ENCODE measurements at regions of chr5 and their contacts with region 1.

Region 1: DNA sequence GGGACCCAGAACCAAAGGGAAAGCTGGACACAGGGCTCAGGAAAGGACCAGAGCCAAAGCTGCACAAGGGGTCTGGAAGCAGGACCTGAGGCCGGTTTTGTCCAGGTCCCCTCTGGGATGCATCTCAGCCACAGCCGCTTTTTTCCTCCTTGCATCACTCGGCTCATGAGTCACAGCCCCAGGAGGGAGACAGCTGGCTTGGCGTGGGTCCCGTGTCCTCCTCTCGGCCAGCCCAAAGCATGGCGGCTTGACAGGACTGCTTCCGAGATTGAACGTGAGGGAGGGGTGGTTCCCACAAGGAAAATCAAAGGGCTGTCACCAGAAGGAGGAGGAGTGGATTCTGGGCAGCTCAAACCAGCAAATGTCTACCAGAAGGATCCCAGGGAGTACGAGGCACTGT is 56.7 kb upstream of the CPLX2 start:
- DNase-seq: peak; percentile 71 to 81
- H3K4me3 ChIP-seq: no peak overlapping the region
- H3K27ac ChIP-seq: peak overlapping the region; percentile 88
- H3K4me1 ChIP-seq: peaks cover 43% of the 10 kb centered on the region
- H3K27me3 ChIP-seq: no peaks in the 10 kb centered on the region
- CTCF ChIP-seq: no peak

Region 2: GRCh38 chr5:175689147-175689991 is 125.3 kb before region 1 on chr5:
- CTCF ChIA-PET with region 1: no interaction called
- POLR2A ChIA-PET with region 1: no interaction called
- intact Hi-C with region 1: no loop called
- DNase-seq: no peak
- H3K4me3 ChIP-seq: no peak overlapping the region
- H3K27ac ChIP-seq: no peak overlapping the region
- H3K4me1 ChIP-seq: no peaks in the 10 kb centered on the region
- H3K27me3 ChIP-seq: peaks cover 100% of the 10 kb centered on the region
- CTCF ChIP-seq: no peak

Region 3: GRCh38 chr5:175800656-175801081 is 14.0 kb before region 1 on chr5:
- CTCF ChIA-PET with region 1: no interaction called
- POLR2A ChIA-PET with region 1: no interaction called
- intact Hi-C with region 1: no loop called
- DNase-seq: peak; percentile 23 to 82
- H3K4me3 ChIP-seq: no peak overlapping the region
- H3K27ac ChIP-seq: no peak overlapping the region
- H3K4me1 ChIP-seq: peaks cover 8% of the 10 kb centered on the region
- H3K27me3 ChIP-seq: 0 out of 2 replicates have a peak, but pooled peaks cover 8% of the 10 kb centered on the region
- CTCF ChIP-seq: no peak

Region 4: GRCh38 chr5:176501333-176501732 is 686.6 kb after region 1 on chr5:
- CTCF ChIA-PET with region 1: no interaction called
- POLR2A ChIA-PET with region 1: interaction called, 15 read pairs
- intact Hi-C with region 1: no loop called
- DNase-seq: peak in 1 of 2 experiments; percentile 70
- H3K4me3 ChIP-seq: no peak overlapping the region
- H3K27ac ChIP-seq: no peak overlapping the region
- H3K4me1 ChIP-seq: peaks cover 19% of the 10 kb centered on the region
- H3K27me3 ChIP-seq: no peaks in the 10 kb centered on the region
- CTCF ChIP-seq: no peak

Region 5: GRCh38 chr5:177142098-177142611 is 1327.5 kb after region 1 on chr5:
- CTCF ChIA-PET with region 1: no interaction called
- POLR2A ChIA-PET with region 1: no interaction called
- intact Hi-C with region 1: no loop called
- DNase-seq: no peak
- H3K4me3 ChIP-seq: no peak overlapping the region
- H3K27ac ChIP-seq: no peak overlapping the region
- H3K4me1 ChIP-seq: no peaks in the 10 kb centered on the region
- H3K27me3 ChIP-seq: no peaks in the 10 kb centered on the region
- CTCF ChIP-seq: no peak

Measured in PC-9 (cell line).